ENCODE measurements at regions of chrX and their contacts with region 1.

Region 1: GRCh38 chrX:78321809-78322208 is 5.6 kb downstream of the CYSLTR1 start:
- DNase-seq: no peak
- ATAC-seq: peak; percentile 92
- H3K4me3 ChIP-seq: no peak overlapping the region
- H3K27ac ChIP-seq: no peak overlapping the region
- H3K4me1 ChIP-seq: peaks cover 4% of the 10 kb centered on the region
- H3K27me3 ChIP-seq: no peaks in the 10 kb centered on the region
- CTCF ChIP-seq: no peak
- EP300 ChIP-seq: no peak
- POLR2A ChIP-seq: no peak
- RAD21 ChIP-seq: no peak

Region 2: DNA sequence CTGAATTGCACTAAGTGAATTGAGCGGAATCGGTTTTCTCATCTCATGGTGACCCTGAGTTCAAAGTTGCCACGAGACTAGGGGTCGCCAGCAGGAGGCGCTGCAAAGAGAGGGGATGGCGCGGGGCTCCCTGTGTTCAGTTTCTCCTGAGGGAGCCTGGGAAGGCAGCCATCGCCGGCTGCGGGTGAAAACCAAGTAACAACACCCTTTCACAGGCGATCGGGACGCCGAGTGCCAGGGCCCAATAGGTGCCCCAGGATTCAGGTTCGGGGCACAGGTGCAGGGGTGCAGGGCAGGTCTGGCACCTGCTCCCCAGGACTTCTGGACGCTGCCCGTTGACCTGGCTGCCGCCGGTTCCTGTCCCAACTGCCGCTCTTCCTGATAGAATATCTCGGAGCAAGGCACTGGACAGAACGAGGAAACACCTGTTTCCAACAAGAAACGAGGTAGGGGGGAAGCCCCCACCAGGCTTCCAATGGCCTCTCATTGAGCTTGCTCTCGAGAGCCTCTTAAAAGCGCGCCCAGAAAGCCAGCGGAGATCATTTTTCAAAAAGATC is 875.7 kb before region 1 on chrX:
- CTCF ChIA-PET with region 1: no interaction called
- POLR2A ChIA-PET with region 1: no interaction called
- RAD21 ChIA-PET with region 1: no interaction called
- SMC1A ChIA-PET with region 1: no interaction called
- in situ Hi-C with region 1: no loop called
- intact Hi-C with region 1: no loop called
- DNase-seq: no peak
- ATAC-seq: no peak
- H3K4me3 ChIP-seq: peak overlapping the region; percentile 22; the same call in 1 of the 2 replicates
- H3K27ac ChIP-seq: no peak overlapping the region
- H3K4me1 ChIP-seq: no peaks in the 10 kb centered on the region
- H3K27me3 ChIP-seq: peaks cover 0 to 5% of the 10 kb centered on the region in 2 experiments; a peak in 3 of 4 replicates
- CTCF ChIP-seq: peak in 1 of 3 experiments; percentile 28; a peak in 2 of 6 replicates
- EP300 ChIP-seq: no peak
- POLR2A ChIP-seq: no peak
- RAD21 ChIP-seq: no peak

Region 3: GRCh38 chrX:78103623-78104446 is 218.0 kb before region 1 on chrX and contains the start of gene PGK1:
- CTCF ChIA-PET with region 1: no interaction called
- POLR2A ChIA-PET with region 1: no interaction called
- RAD21 ChIA-PET with region 1: no interaction called
- SMC1A ChIA-PET with region 1: no interaction called
- in situ Hi-C with region 1: no loop called
- intact Hi-C with region 1: loop called (anchors 10 kb)
- DNase-seq: peak; percentile 84
- ATAC-seq: peak; percentile 96
- H3K4me3 ChIP-seq: peak within 1 kb of the TSS; percentile 82
- H3K27ac ChIP-seq: peak within 1 kb of the TSS; percentile 86
- H3K4me1 ChIP-seq: peaks cover 3% of the 10 kb centered on the region; the same call in 1 of the 2 replicates
- H3K27me3 ChIP-seq: no peaks in the 10 kb centered on the region
- CTCF ChIP-seq: no peak
- EP300 ChIP-seq: 0 out of 4 replicates have a peak, but pooled peaks of 1 of the 2 experiments have one; percentile 19
- POLR2A ChIP-seq: peak; percentile 98
- RAD21 ChIP-seq: no peak
- polyA plus RNA-seq, gene PGK1: 633 to 835 TPM

Region 4: DNA sequence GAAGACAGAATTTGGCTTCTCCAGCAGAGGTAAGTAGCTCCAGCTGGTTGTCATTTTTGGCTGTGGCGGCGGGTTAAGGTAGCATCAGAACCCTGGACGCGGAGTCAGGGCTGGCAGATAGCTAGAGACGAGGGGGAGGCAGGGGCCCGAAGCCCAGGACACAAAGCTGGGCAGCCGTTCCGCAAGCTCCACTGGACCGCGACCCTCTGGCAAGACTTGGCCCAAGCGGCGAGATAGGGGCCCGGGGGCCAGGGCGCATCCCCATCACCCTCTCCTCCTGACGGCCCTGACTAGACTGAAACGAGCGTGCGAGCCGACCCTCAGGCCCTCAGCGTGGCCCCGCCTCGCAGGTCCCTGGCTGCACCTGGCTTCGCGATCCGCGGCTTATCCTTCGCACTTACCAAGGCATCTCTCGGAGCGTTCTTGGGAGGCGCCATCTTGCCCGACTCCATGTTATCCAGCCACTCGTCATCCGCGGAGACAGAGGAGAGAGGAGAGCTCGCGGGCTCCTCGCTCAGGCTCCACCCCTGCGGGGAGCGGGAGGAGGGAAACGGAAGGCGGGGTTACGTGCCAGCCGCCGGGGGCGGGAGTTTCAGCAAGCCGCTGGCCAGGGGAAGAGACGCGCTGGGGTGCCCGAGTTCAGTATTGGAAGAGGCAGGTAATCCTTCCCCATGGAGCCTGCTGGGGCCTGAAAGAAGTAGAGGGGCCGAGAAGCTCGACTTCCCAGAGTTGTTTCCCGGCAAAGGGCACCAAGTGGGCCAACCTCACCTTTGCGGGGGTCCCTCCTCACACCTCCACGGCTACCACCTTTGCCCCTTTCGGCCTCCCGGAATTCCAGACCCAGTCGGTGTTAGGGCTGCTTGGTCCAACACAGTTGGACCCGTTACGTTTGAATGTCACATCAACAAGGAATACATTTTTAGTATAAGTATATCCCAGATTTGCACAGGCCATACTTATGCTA is 182.4 kb before region 1 on chrX and contains the start of gene TAF9B:
- CTCF ChIA-PET with region 1: interaction called, 3 read pairs
- POLR2A ChIA-PET with region 1: no interaction called
- RAD21 ChIA-PET with region 1: no interaction called
- SMC1A ChIA-PET with region 1: interaction called, 5 read pairs
- in situ Hi-C with region 1: no loop called
- intact Hi-C with region 1: loop called (anchors 5 kb)
- DNase-seq: peak; percentile 51
- ATAC-seq: peak; percentile 98
- H3K4me3 ChIP-seq: peak within 1 kb of the TSS; percentile 64
- H3K27ac ChIP-seq: peak within 1 kb of the TSS; percentile 51
- H3K4me1 ChIP-seq: no peaks in the 10 kb centered on the region
- H3K27me3 ChIP-seq: no peaks in the 10 kb centered on the region
- CTCF ChIP-seq: no peak
- EP300 ChIP-seq: no peak
- POLR2A ChIP-seq: peak; percentile 86
- RAD21 ChIP-seq: no peak
- polyA plus RNA-seq, gene TAF9B: 19.0 to 20.8 TPM

Region 5: DNA sequence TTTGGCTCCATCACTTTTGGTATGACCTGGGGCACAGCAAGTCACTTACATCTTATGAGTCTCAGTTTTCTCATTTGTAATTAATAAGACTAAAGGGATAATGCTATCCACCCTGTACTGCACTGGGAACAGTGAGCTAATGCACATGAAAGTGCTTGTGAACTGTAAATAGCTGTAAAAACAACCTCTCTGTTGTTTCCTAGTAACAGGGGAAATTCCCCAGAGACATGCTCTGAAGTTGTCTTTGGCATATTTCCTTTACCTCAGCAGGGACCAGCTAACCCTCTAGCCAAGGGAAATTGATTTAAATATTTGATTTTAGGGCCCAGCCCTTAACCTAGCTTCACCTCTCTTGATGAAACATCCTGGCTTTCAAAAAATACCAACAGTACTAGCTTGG is 11.7 kb after region 1 on chrX:
- CTCF ChIA-PET with region 1: interaction called, 4 read pairs
- POLR2A ChIA-PET with region 1: interaction called, 10 read pairs
- RAD21 ChIA-PET with region 1: interaction called, 6 read pairs
- SMC1A ChIA-PET with region 1: interaction called, 28 read pairs
- in situ Hi-C with region 1: no loop called
- intact Hi-C with region 1: no loop called
- DNase-seq: no peak
- ATAC-seq: peak; percentile 72
- H3K4me3 ChIP-seq: no peak overlapping the region
- H3K27ac ChIP-seq: 0 out of 2 replicates have a peak overlapping the region, but pooled peaks have one; percentile 8
- H3K4me1 ChIP-seq: peaks cover 13% of the 10 kb centered on the region
- H3K27me3 ChIP-seq: no peaks in the 10 kb centered on the region
- CTCF ChIP-seq: no peak
- EP300 ChIP-seq: no peak
- POLR2A ChIP-seq: no peak
- RAD21 ChIP-seq: no peak

Measured in GM12878 (cell line).